Left cardiac atrium (tissue), 4 donors: ENCODE measurements at regions of chr9 and their contacts with region 1.

Region 1: GRCh38 chr9:26310294-26310693 is 582.3 kb downstream of the CAAP1 start:
- DNase-seq: no peak
- ATAC-seq: no peak

Region 2: GRCh38 chr9:26346942-26347477 is 36.7 kb after region 1 on chr9:
- intact Hi-C with region 1: loop called in 1 of 2 experiments (anchors 5 kb)
- DNase-seq: peak; percentile 8
- ATAC-seq: no peak